ENCODE measurements at regions of chr15 and their contacts with region 1.

Region 1: GRCh38 chr15:83549623-83550022 is 102.5 kb downstream of the SH3GL3 start:
- DNase-seq: no peak
- H3K4me3 ChIP-seq: no peak overlapping the region
- H3K27ac ChIP-seq: no peak overlapping the region
- H3K4me1 ChIP-seq: no peaks in the 10 kb centered on the region
- H3K27me3 ChIP-seq: no peaks in the 10 kb centered on the region
- CTCF ChIP-seq: no peak
- POLR2A ChIP-seq: no peak

Region 2: GRCh38 chr15:82647045-82647834 is 902.4 kb before region 1 on chr15 and contains the start of gene CPEB1:
- intact Hi-C with region 1: no loop called
- DNase-seq: no peak
- H3K4me3 ChIP-seq: peak within 1 kb of the TSS; percentile 54 to 74 (median 56)
- H3K27ac ChIP-seq: peak within 1 kb of the TSS in 1 of 2 donors; percentile 13
- H3K4me1 ChIP-seq: no peaks in the 10 kb centered on the region
- H3K27me3 ChIP-seq: peaks cover 3 to 47% of the 10 kb centered on the region in 2 donors
- CTCF ChIP-seq: no peak
- POLR2A ChIP-seq: no peak
- total RNA-seq, gene CPEB1: 2.2 to 6.9 (median 4.6) TPM

Region 3: GRCh38 chr15:83230258-83230657 is 319.4 kb before region 1 on chr15:
- intact Hi-C with region 1: no loop called
- DNase-seq: no peak
- H3K4me3 ChIP-seq: no peak overlapping the region
- H3K27ac ChIP-seq: no peak overlapping the region
- H3K4me1 ChIP-seq: no peaks in the 10 kb centered on the region
- H3K27me3 ChIP-seq: no peaks in the 10 kb centered on the region
- CTCF ChIP-seq: no peak
- POLR2A ChIP-seq: no peak

Region 4: DNA sequence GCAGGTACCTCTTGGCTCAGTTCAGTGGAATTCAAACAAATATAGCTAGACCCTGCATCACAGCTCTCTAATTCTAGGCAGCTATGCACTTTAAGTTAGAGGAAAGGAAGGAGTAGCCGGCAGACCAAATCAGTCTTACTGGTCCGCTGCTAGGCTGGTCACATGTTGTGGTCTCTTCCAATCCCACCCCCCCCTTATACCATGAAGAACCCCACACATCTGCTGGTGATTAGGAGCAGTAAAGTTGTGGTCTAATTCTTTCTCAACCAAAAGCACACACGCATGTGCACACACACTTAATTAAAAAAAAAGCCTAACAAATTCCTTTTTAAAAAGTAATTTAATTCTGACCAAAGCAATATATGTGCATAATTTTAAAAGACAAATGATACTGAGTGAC is 119.2 kb before region 1 on chr15:
- intact Hi-C with region 1: loop called (anchors 5 kb)
- DNase-seq: no peak
- H3K4me3 ChIP-seq: no peak overlapping the region
- H3K27ac ChIP-seq: no peak overlapping the region
- H3K4me1 ChIP-seq: no peaks in the 10 kb centered on the region
- H3K27me3 ChIP-seq: no peaks in the 10 kb centered on the region
- CTCF ChIP-seq: no peak
- POLR2A ChIP-seq: no peak